ENCODE measurements at regions of chr14 and their contacts with region 1.

Region 1: GRCh38 chr14:41609704-41610183 is 3.1 kb downstream of the LRFN5 start:
- DNase-seq: peak; percentile 56
- ATAC-seq: peak; percentile 97
- H3K4me3 ChIP-seq: peak overlapping the region; percentile 53
- H3K27ac ChIP-seq: no peak overlapping the region
- H3K4me1 ChIP-seq: no peaks in the 10 kb centered on the region
- H3K27me3 ChIP-seq: peaks cover 73% of the 10 kb centered on the region
- CTCF ChIP-seq: peak; percentile 56

Region 2: DNA sequence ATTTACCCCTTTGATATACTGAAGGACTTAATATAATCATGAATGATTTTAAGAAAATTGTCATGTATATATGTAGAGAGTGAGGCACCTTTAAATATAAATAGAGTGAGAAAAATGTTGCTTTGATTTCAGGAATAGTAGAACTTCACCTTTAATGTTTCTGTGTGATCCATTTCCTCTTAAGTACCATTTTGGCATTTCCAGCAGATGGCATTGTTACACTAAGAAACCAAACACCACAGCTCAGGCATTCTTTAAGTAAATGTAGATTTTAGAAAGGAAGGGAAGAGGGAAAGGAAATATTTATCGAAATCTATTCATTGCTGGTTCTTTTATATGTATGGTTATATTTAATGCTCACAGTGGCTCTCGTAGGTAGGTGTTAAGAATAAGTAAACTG is 1620.8 kb before region 1 on chr14:
- CTCF ChIA-PET with region 1: no interaction called
- POLR2A ChIA-PET with region 1: no interaction called
- intact Hi-C with region 1: loop called (anchors 5 kb)
- DNase-seq: peak; percentile 78
- ATAC-seq: peak; percentile 93
- H3K4me3 ChIP-seq: no peak overlapping the region
- H3K27ac ChIP-seq: no peak overlapping the region
- H3K4me1 ChIP-seq: no peaks in the 10 kb centered on the region
- H3K27me3 ChIP-seq: no peaks in the 10 kb centered on the region
- CTCF ChIP-seq: peak; percentile 93

Region 3: DNA sequence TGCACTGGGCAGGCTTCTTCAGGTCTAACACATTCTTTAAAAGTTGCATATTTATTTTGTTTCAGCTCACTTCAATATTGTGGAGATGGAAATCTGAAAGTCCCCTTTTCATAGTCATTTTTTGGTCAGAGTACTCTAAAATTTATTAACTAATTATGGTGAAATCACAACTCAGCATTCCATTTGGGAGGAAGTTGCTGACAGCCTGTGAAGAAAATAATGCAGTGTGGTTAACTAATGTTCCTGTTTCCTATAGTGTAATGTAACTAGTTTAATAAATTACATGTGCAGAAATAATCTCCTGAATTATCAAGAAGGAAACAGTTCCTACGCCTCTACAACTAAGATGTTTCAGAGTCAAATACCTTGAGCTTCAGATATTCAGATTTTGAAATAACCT is 14.0 kb after region 1 on chr14:
- CTCF ChIA-PET with region 1: no interaction called
- POLR2A ChIA-PET with region 1: no interaction called
- intact Hi-C with region 1: no loop called
- DNase-seq: no peak
- ATAC-seq: no peak
- H3K4me3 ChIP-seq: no peak overlapping the region
- H3K27ac ChIP-seq: no peak overlapping the region
- H3K4me1 ChIP-seq: no peaks in the 10 kb centered on the region
- H3K27me3 ChIP-seq: no peaks in the 10 kb centered on the region
- CTCF ChIP-seq: no peak

Region 4: GRCh38 chr14:41825622-41826021 is 215.9 kb after region 1 on chr14:
- CTCF ChIA-PET with region 1: interaction called, 5 read pairs
- POLR2A ChIA-PET with region 1: no interaction called
- intact Hi-C with region 1: loop called (anchors 5 kb)
- DNase-seq: no peak
- ATAC-seq: no peak
- H3K4me3 ChIP-seq: no peak overlapping the region
- H3K27ac ChIP-seq: no peak overlapping the region
- H3K4me1 ChIP-seq: peaks cover 3% of the 10 kb centered on the region; the same call in 1 of the 2 replicates
- H3K27me3 ChIP-seq: no peaks in the 10 kb centered on the region
- CTCF ChIP-seq: no peak

Region 5: DNA sequence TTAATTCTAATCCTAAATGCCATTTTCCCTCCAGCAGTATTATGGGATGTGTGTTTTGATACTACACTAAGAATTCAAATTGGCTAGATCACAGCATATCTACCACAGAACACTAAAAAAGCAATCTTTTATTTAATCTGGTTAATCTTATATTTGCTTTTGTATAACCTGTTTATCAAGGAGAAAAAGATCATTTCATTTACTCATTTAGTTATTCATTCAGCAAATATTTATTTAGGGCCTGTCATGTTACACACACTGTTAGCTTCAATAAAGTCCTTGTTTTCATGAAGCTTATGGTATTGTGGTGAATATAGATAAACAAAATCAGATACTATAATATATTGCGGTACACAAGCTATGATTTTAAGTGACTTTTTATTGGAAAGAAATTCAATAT is 347.7 kb after region 1 on chr14:
- CTCF ChIA-PET with region 1: interaction called, 3 read pairs
- POLR2A ChIA-PET with region 1: no interaction called
- intact Hi-C with region 1: loop called (anchors 1 kb)
- DNase-seq: peak; percentile 87
- ATAC-seq: peak; percentile 94
- H3K4me3 ChIP-seq: no peak overlapping the region
- H3K27ac ChIP-seq: peak overlapping the region; percentile 54; the same call in 1 of the 2 replicates
- H3K4me1 ChIP-seq: peaks cover 16% of the 10 kb centered on the region
- H3K27me3 ChIP-seq: no peaks in the 10 kb centered on the region
- CTCF ChIP-seq: no peak

Region 6: GRCh38 chr14:42090122-42090521 is 480.4 kb after region 1 on chr14:
- CTCF ChIA-PET with region 1: no interaction called
- POLR2A ChIA-PET with region 1: no interaction called
- intact Hi-C with region 1: loop called (anchors 5 kb)
- DNase-seq: peak; percentile 73
- ATAC-seq: peak; percentile 88
- H3K4me3 ChIP-seq: no peak overlapping the region
- H3K27ac ChIP-seq: no peak overlapping the region
- H3K4me1 ChIP-seq: peaks cover 11% of the 10 kb centered on the region
- H3K27me3 ChIP-seq: no peaks in the 10 kb centered on the region
- CTCF ChIP-seq: no peak

Region 7: GRCh38 chr14:42224053-42224888 is 614.5 kb after region 1 on chr14:
- CTCF ChIA-PET with region 1: interaction called, 3 read pairs
- POLR2A ChIA-PET with region 1: no interaction called
- intact Hi-C with region 1: loop called (anchors 1 kb)
- DNase-seq: peak; percentile 90
- ATAC-seq: peak; percentile 57
- H3K4me3 ChIP-seq: no peak overlapping the region
- H3K27ac ChIP-seq: peak overlapping the region; percentile 38
- H3K4me1 ChIP-seq: peaks cover 26% of the 10 kb centered on the region
- H3K27me3 ChIP-seq: no peaks in the 10 kb centered on the region
- CTCF ChIP-seq: peak; percentile 96

Measured in PC-3 (cell line).